Upper lobe of right lung (tissue), 1 donor: ENCODE measurements at regions of chr17 and their contacts with region 1.

Region 1: DNA sequence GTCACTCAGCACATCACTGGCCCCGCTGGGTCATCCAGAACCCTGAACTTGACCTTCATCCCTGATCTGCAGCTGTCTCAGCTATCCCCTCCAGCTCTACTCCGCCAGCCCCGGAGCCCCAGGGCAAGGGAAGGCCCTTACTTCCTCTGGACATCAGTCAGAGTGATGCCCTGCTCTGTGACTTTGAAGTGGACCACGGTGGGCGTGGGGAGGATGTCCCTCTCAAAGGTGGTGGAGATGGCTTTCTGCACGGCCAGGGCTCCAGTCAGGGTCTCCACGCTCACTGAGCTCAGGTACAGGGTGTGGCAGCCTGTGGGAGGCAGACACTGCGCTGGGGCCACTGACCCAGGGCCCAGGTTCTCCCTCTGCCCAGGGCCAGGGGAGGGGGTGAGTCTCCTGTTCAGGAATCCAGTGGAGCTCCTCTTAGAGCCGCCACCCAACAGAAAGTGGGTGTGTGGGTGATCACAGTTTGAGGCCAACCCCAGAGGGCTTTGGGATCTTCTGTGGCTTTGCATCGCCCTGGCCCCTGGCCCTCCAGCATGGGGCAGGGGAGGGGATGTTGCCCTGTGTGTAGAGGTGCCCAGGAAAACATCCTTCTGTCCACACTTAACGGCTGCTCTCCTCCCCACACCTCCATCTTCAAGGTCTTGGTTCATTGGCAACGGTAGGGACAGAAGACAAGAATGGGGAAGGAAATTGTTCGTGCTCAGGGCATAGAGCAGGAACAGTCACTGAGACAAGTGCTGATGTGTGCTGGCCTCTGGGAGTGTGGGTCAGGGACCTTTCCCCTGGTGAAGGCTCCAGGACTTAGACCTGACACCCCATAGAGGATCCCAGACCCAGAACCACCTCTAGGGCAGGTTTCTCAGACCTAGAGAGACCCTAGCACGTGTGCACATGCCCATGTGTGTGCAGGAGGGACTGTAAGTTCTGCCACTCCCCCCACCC is 21.6 kb downstream of the TNS4 start:
- DNase-seq: no peak
- ATAC-seq: no peak
- H3K4me3 ChIP-seq: no peak overlapping the region
- H3K27ac ChIP-seq: peak overlapping the region; percentile 17
- H3K4me1 ChIP-seq: peaks cover 11% of the 10 kb centered on the region
- H3K27me3 ChIP-seq: no peaks in the 10 kb centered on the region
- CTCF ChIP-seq: no peak

Region 2: GRCh38 chr17:40531051-40531991 is 51.5 kb after region 1 on chr17:
- intact Hi-C with region 1: loop called (anchors 5 kb)
- DNase-seq: peak; percentile 57
- ATAC-seq: no peak
- H3K4me3 ChIP-seq: no peak overlapping the region
- H3K27ac ChIP-seq: no peak overlapping the region
- H3K4me1 ChIP-seq: peaks cover 37% of the 10 kb centered on the region
- H3K27me3 ChIP-seq: no peaks in the 10 kb centered on the region
- CTCF ChIP-seq: no peak